Posterior cingulate gyrus (tissue), 11 donors: ENCODE measurements at regions of chr16 and their contacts with region 1.

Region 1: GRCh38 chr16:69709456-69710084 is 16.8 kb downstream of the NQO1 start:
- DNase-seq: no peak

Region 2: DNA sequence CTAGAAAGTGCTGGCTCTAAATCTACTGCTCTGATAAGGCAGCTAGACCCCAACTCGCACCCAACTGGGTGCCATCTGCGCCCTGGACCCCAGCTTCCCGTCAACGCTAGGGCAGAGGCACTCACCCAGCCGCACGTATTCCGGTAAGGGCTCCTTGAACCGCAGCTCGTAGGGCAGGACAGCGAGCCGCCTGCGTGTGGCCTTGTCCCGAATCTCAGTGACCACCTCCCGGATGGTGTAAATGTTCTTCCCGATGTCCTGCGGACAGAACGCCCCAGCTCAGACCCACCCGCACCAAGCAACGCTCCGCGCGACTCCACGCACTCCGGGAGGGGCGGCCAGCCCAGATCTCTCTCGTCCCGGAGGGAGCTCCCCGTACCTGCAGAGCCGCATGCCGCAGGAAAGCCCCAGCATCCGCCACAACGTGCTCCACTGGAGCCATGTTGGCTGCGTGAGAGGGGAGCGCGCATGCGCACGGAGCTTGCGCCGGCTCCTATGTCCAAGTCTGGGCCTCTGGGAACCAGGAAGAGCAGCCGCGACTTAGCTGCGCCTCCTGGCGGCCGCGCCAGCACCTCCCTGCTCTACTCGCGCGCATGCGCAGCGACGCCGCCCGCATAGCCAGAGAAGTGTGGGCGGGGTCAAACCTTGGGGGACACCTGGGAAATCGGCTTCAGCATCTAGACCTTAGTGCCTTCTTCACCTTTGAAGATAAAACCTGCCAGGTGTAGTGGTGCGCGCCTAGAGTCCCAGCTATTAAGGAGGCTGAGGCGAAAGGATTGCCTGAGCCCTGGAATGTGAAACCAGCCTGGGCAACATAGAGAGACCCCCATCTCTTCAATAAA is 45.1 kb after region 1 on chr16 and contains the start of gene NOB1:
- intact Hi-C with region 1: loop called (anchors 2 kb)
- DNase-seq: peak; percentile 93 to 100 (median 96)